Lower leg skin (tissue), 4 donors: ENCODE measurements at regions of chr1 and their contacts with region 1.

Region 1: GRCh38 chr1:33295450-33296081 is 25.3 kb downstream of the A3GALT2 start:
- DNase-seq: peak; percentile 87 to 98
- H3K4me3 ChIP-seq: no peak overlapping the region
- CTCF ChIP-seq: peak in 1 of 3 donors; percentile 95
- POLR2A ChIP-seq: no peak

Region 2: GRCh38 chr1:31296486-31297276 is 1998.9 kb before region 1 on chr1 and contains the starts of genes SNRNP40 and ZCCHC17:
- intact Hi-C with region 1: no loop called
- DNase-seq: peak; percentile 99
- H3K4me3 ChIP-seq: peak within 1 kb of the TSS; percentile 97
- CTCF ChIP-seq: no peak
- POLR2A ChIP-seq: no peak
- total RNA-seq, gene SNRNP40: 24.4 to 57.7 (median 37.0) TPM
- total RNA-seq, gene ZCCHC17: 14.9 to 23.2 (median 17.6) TPM

Region 3: DNA sequence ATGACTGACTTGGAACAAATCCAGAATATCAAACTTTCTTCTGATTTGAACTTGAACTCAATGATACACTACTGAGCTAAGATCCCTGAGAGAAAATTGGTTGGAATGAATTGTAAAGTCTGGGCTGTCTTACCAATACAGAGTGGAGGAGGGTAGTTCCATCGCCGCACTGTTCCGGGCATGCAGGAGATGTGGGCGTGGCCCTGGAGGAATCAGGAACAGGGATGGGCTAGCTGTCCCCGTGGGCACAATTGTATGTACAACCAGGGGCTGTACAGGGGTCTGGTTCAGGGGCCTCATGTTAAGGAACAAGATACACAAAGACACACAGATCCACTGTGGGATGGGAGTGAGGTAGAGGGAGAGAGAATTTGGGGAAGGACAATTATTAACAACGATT is 321.2 kb after region 1 on chr1:
- intact Hi-C with region 1: loop called (anchors 10 kb)
- DNase-seq: no peak
- H3K4me3 ChIP-seq: no peak overlapping the region
- CTCF ChIP-seq: no peak
- POLR2A ChIP-seq: no peak

Region 4: GRCh38 chr1:33680281-33680840 is 384.8 kb after region 1 on chr1:
- intact Hi-C with region 1: no loop called
- DNase-seq: no peak
- H3K4me3 ChIP-seq: no peak overlapping the region
- CTCF ChIP-seq: no peak
- POLR2A ChIP-seq: no peak